ENCODE measurements at regions of chr12 and their contacts with region 1.

Region 1: DNA sequence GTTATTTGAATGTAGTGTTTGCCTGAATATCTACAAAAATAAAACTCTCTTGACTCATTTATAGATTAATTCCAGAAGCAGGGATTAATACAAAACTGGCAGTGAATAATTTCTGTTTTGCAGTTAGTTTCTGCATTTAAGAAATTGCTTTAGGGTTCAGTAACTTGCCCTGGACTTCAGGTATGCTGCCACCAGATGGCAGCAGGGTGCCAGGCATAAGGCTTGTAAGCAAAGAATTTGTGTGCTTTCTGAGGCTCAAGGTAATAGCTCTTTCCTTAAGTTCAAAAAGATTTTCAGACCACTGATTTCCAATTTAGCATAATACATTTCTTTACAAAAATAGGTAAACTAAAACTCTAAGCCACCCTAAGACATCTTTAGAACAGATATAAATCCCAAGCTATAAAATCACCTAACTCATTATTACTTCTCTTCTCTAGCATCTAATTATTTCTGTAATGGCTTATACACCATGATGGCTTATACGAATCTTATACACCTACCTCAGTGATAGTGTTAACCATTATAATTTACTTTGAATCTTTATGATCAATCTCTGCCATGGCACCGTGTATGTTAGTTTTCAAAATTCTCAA is 398.3 kb downstream of the APAF1 start:
- DNase-seq: peak; percentile 45
- H3K27ac ChIP-seq: no peak overlapping the region
- CTCF ChIP-seq: peak; percentile 90

Region 2: GRCh38 chr12:98845957-98846356 is 197.5 kb before region 1 on chr12:
- CTCF ChIA-PET with region 1: no interaction called
- POLR2A ChIA-PET with region 1: no interaction called
- DNase-seq: no peak
- H3K27ac ChIP-seq: no peak overlapping the region
- CTCF ChIP-seq: no peak

Region 3: GRCh38 chr12:99019798-99020197 is 23.6 kb before region 1 on chr12:
- CTCF ChIA-PET with region 1: no interaction called
- POLR2A ChIA-PET with region 1: no interaction called
- DNase-seq: no peak
- H3K27ac ChIP-seq: no peak overlapping the region
- CTCF ChIP-seq: no peak

Region 4: DNA sequence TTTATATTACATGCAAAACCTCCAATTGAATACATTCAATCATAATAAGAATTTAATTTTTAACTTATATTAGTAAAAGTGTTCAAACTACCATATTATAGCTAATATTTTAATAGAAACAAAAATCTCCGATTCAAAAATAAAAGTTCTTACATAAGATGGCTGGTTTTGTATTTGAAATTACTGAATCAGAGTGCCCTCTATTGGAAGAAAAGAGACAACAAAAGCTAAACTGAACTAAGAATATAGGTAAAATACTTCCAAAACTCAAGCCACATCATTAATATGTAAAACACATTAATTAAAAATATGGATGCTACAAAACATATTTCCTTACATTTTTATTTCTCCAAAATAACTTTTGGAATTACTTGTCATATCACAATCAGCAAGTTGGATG is 724.4 kb after region 1 on chr12:
- CTCF ChIA-PET with region 1: interaction called, 12 read pairs
- POLR2A ChIA-PET with region 1: no interaction called
- DNase-seq: peak; percentile 5
- H3K27ac ChIP-seq: no peak overlapping the region
- CTCF ChIP-seq: peak; percentile 63